PC-3 (cell line): ENCODE measurements at regions of chr17 and their contacts with region 1.

Region 1: GRCh38 chr17:78360371-78361224 is 721 bp upstream of the SOCS3 start:
- DNase-seq: peak; percentile 98
- ATAC-seq: peak; percentile 73
- H3K4me3 ChIP-seq: peak overlapping the region; percentile 81
- H3K27ac ChIP-seq: peak overlapping the region; percentile 74
- H3K4me1 ChIP-seq: peaks cover 34% of the 10 kb centered on the region
- H3K27me3 ChIP-seq: no peaks in the 10 kb centered on the region
- CTCF ChIP-seq: peak; percentile 95

Region 2: DNA sequence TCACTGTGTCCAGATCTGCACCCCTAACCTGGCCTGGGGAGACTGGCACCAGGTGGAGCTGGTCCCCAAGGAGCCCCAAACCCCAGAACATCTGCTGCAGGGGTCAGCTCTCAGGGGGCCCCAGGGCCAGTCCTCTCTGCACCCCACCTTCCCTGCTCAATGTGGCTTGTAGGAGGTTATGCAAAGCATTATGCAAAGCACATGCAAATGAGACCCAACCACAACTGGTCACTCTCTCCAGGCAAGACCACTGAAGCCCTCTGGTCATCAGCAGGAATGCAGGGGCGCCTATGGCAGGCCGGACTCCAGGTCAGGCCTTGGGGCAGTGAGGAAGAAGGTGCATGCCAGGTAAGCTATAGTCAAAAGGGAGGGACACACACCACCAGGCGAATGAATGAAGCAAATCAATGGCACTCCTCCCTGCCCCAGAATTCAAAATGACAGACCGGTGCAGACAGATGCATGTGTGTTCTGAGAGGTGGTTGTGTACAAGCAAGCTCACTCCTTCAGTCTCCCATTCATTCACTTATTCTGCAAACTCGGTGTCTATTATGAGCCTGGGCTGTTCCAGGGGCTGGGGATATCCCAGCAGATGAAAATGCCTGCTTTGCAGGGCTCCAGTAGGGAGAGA is 81.1 kb before region 1 on chr17:
- CTCF ChIA-PET with region 1: no interaction called
- POLR2A ChIA-PET with region 1: no interaction called
- intact Hi-C with region 1: no loop called
- DNase-seq: no peak
- ATAC-seq: no peak
- H3K4me3 ChIP-seq: no peak overlapping the region
- H3K27ac ChIP-seq: no peak overlapping the region
- H3K4me1 ChIP-seq: no peaks in the 10 kb centered on the region
- H3K27me3 ChIP-seq: no peaks in the 10 kb centered on the region
- CTCF ChIP-seq: no peak

Region 3: GRCh38 chr17:78289802-78290363 is 70.7 kb before region 1 on chr17:
- CTCF ChIA-PET with region 1: interaction called, 4 read pairs
- POLR2A ChIA-PET with region 1: interaction called, 20 read pairs
- intact Hi-C with region 1: loop called (anchors 1 kb)
- DNase-seq: peak; percentile 94
- ATAC-seq: peak; percentile 93
- H3K4me3 ChIP-seq: no peak overlapping the region
- H3K27ac ChIP-seq: no peak overlapping the region
- H3K4me1 ChIP-seq: peaks cover 13% of the 10 kb centered on the region
- H3K27me3 ChIP-seq: no peaks in the 10 kb centered on the region
- CTCF ChIP-seq: peak; percentile 91

Region 4: GRCh38 chr17:78313735-78314648 is 46.6 kb before region 1 on chr17:
- CTCF ChIA-PET with region 1: no interaction called
- POLR2A ChIA-PET with region 1: interaction called, 3 read pairs
- intact Hi-C with region 1: loop called (anchors 1 kb)
- DNase-seq: peak; percentile 99
- ATAC-seq: peak; percentile 62
- H3K4me3 ChIP-seq: peak overlapping the region; percentile 68
- H3K27ac ChIP-seq: peak overlapping the region; percentile 96
- H3K4me1 ChIP-seq: peaks cover 45% of the 10 kb centered on the region
- H3K27me3 ChIP-seq: no peaks in the 10 kb centered on the region
- CTCF ChIP-seq: no peak

Region 5: DNA sequence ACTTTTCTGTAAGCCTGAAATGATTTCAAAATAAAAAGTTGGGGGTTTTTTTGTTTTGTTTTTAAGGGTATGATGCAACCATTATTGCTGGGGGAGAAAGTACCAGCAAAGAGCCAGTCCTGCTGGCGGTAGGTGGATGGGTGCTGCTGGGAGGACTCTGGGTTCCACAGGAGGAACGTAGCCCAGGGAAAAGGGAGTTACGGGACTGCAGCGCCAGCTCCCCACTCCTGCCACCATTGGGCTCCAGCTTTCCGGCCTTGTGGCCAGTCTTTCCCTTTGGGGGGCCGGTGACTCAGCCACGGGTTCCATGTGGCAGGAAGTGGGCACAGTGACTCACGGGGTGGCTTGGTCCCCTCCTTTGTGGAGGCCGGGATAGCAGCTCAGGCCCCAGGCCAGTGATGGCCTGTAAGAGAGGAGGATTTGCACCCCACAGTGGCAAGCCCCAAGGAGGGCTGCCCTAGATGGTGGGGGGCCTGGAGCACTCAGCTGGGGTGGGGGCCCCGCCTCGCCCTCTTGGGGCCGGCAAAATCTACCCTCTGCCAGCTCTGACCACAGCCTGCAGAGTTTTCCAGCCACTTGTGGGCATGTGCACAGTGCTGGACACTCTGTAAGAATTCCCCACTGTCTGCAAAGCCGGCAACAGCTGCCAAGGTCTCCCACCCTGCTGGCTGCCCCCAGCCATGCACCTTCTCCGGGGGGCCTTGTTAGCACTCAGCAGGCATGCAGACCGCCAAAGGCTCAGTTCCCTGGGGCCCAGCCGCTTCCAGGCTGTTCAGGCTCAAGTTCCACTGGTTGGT is 31.1 kb before region 1 on chr17:
- CTCF ChIA-PET with region 1: interaction called, 4 read pairs
- POLR2A ChIA-PET with region 1: no interaction called
- intact Hi-C with region 1: loop called (anchors 1 kb)
- DNase-seq: peak; percentile 72
- ATAC-seq: peak; percentile 46
- H3K4me3 ChIP-seq: no peak overlapping the region
- H3K27ac ChIP-seq: peak overlapping the region; percentile 72
- H3K4me1 ChIP-seq: peaks cover 47% of the 10 kb centered on the region
- H3K27me3 ChIP-seq: no peaks in the 10 kb centered on the region
- CTCF ChIP-seq: no peak

Region 6: DNA sequence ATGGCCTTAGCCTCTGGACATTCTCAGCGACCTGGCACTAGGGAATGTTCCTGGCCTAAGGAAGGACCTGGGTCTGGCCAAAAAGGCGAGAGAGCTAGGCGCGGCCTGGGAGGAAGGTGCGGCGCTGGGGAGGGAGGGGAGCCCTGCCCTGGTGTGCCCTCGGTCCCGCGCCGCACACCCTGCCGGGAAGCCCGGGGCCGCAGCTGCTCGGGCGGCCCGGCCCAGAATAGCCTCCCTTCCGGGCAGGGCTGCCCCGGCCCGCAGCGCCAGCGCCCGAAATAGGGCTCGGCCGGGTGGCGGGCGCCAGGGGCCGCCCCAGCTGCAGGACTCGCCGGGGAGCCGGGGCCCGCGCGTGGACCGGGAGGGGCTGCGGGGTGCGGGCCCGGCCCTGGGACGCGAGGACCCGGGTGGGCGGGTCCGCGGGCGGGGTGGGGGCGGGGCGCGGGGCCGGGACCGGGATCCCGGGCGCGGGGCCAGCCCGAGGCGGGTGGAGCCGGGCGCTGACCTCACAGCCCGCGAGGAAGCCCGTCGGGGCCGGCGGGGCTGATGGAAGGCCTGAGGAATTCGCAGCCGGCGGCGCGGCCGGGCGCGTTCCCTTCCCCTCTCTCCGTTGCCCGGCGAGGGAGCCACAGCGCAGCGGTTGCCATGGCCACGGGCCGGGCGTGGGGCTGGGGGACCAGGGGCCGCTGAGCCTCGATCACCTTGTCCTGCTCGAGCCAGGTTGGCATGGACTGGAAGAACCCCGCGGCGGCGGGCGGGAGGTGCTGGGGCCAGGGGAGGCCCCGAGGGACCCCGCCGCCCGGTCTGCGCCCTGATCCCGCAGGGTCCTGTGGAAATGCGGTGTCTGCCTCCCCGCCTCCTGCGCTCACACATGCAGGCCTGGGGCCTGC is 18.8 kb before region 1 on chr17:
- CTCF ChIA-PET with region 1: interaction called, 13 read pairs
- POLR2A ChIA-PET with region 1: no interaction called
- intact Hi-C with region 1: loop called (anchors 1 kb)
- DNase-seq: peak; percentile 82
- ATAC-seq: peak; percentile 36
- H3K4me3 ChIP-seq: peak overlapping the region; percentile 60
- H3K27ac ChIP-seq: peak overlapping the region; percentile 97
- H3K4me1 ChIP-seq: peaks cover 75% of the 10 kb centered on the region
- H3K27me3 ChIP-seq: no peaks in the 10 kb centered on the region
- CTCF ChIP-seq: no peak

Region 7: GRCh38 chr17:78378225-78379130 is 17.9 kb after region 1 on chr17 and contains the start of gene PGS1:
- CTCF ChIA-PET with region 1: interaction called, 5 read pairs
- POLR2A ChIA-PET with region 1: no interaction called
- intact Hi-C with region 1: loop called (anchors 2 kb)
- DNase-seq: peak; percentile 78
- ATAC-seq: peak; percentile 62
- H3K4me3 ChIP-seq: peak within 1 kb of the TSS; percentile 78
- H3K27ac ChIP-seq: peak within 1 kb of the TSS; percentile 76
- H3K4me1 ChIP-seq: peaks cover 67% of the 10 kb centered on the region
- H3K27me3 ChIP-seq: no peaks in the 10 kb centered on the region
- CTCF ChIP-seq: 0 out of 2 replicates have a peak, but pooled peaks have one; percentile 9
- total RNA-seq, gene PGS1: 40.6 and 47.0 TPM in 2 replicates

Region 8: DNA sequence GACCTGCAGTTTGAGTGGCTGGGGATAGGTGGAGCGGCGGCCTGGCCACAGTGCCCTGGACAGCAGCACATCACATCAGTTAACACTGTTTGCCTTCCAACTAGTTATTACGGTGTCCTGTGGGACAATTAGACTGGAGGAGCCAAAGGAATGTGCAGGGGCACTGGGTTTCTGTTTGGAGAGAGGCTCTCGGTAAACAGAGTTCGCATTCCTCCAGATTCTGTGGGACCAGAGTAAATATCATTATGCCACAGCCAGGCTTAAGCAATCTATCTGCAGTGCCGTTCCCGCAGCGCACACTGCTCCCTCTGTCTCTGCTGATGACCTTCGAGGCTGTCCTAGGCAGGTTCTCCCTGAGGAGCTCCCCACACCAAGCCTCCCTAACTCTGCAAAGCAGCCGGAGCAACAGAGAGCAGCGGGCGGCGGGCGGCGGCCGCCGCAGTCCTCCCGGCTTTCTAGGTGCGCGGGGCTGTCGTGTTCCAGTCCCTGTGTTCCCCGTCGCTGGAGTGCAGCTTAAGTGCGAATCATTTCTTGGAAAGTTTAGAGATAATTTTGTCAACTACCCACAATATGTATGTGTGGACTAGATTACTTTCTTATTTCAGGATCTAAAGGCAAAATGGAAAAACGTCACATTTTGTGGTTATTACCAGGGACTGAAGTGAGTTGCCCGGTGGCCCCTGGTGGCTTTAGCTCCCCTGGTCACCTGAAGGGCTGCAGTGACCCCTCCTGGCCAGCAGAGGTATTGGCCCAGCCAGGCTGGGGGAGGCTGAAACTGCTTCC is 61.1 kb after region 1 on chr17:
- CTCF ChIA-PET with region 1: interaction called, 20 read pairs
- POLR2A ChIA-PET with region 1: no interaction called
- intact Hi-C with region 1: loop called (anchors 1 kb)
- DNase-seq: peak; percentile 87
- ATAC-seq: peak; percentile 91
- H3K4me3 ChIP-seq: no peak overlapping the region
- H3K27ac ChIP-seq: no peak overlapping the region
- H3K4me1 ChIP-seq: no peaks in the 10 kb centered on the region
- H3K27me3 ChIP-seq: no peaks in the 10 kb centered on the region
- CTCF ChIP-seq: peak; percentile 99